HepG2 (cell line): ENCODE measurements at regions of chr1 and their contacts with region 1.

Region 1: GRCh38 chr1:181936768-181937581 is 124.5 kb downstream of the ZNF648 start:
- DNase-seq: peak; percentile 57
- ATAC-seq: peak; percentile 97
- H3K4me3 ChIP-seq: no peak overlapping the region
- H3K27ac ChIP-seq: no peak overlapping the region
- H3K4me1 ChIP-seq: no peaks in the 10 kb centered on the region
- H3K27me3 ChIP-seq: no peaks in the 10 kb centered on the region; a peak in 1 of 5 replicates
- CTCF ChIP-seq: peak; percentile 86
- EP300 ChIP-seq: no peak
- POLR2A ChIP-seq: no peak
- RAD21 ChIP-seq: peak; percentile 69

Region 2: DNA sequence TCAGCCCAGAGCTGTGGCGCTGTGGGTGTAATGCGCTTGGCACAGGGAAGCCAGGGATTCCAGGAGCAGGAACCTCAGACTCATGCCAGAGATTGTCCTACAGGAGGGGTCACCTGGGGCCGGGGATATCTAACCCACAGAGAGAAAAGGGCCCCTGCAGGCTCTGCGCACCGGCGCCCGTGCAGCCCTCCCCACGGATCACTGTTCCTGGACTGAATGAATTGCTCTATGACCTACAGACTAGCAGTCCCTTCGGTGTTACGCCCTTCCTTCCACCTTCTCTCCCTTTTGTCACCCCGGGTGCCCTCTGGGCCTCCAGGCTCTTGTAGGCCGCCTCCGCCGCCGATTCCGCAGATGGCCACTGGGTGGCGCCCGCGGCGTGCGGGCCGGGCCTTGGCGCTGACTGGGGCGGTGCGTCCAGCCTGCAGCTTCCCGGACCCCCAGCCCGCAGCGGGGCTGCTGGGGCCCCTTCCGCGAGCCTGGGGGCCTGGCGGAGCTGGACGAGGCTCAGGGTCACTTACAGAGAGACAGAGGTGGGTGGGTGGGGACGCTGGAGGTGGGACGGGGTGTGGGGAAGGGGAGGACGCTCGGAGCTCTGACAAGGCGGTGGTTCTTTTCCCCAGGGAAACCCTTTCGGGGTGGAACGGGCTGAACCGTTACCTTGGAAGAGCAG is 747.1 kb before region 1 on chr1:
- CTCF ChIA-PET with region 1: no interaction called
- POLR2A ChIA-PET with region 1: no interaction called
- in situ Hi-C with region 1: no loop called
- intact Hi-C with region 1: loop called (anchors 5 kb)
- DNase-seq: peak; percentile 20
- ATAC-seq: peak; percentile 98
- H3K4me3 ChIP-seq: peak overlapping the region; percentile 21 to 49 (median 27); a peak in 4 of 6 replicates
- H3K27ac ChIP-seq: no peak overlapping the region
- H3K4me1 ChIP-seq: peaks cover 5% of the 10 kb centered on the region; the same call in 1 of the 2 replicates
- H3K27me3 ChIP-seq: peaks cover 3 to 18% of the 10 kb centered on the region in 2 experiments; a peak in 2 of 5 replicates
- CTCF ChIP-seq: peak; percentile 94
- EP300 ChIP-seq: no peak
- POLR2A ChIP-seq: no peak
- RAD21 ChIP-seq: peak; percentile 93

Region 3: DNA sequence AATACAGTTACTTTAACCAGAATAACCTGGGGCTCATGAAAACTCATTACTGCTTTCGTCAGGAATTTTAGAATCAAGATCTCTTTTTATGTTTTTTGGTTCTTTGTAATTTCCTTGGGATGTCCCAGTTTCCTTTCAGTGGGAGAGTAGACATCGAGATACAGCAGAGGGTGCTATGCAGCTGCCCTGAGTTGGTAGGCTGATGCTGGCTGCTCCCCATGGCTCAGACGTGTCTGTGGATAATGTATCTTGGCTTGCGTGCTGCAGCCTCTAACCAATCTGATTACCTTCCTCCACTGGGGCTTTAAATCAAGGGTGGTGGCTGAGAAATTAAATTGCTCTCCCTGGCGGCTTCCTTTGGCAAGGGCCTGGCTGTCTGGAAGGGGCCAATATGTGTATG is 199.9 kb before region 1 on chr1:
- CTCF ChIA-PET with region 1: no interaction called
- POLR2A ChIA-PET with region 1: no interaction called
- in situ Hi-C with region 1: no loop called
- intact Hi-C with region 1: loop called (anchors 5 kb)
- DNase-seq: no peak
- ATAC-seq: no peak
- H3K4me3 ChIP-seq: no peak overlapping the region
- H3K27ac ChIP-seq: no peak overlapping the region
- H3K4me1 ChIP-seq: no peaks in the 10 kb centered on the region
- H3K27me3 ChIP-seq: no peaks in the 10 kb centered on the region; a peak in 1 of 5 replicates
- CTCF ChIP-seq: no peak
- EP300 ChIP-seq: no peak
- POLR2A ChIP-seq: no peak
- RAD21 ChIP-seq: no peak

Region 4: DNA sequence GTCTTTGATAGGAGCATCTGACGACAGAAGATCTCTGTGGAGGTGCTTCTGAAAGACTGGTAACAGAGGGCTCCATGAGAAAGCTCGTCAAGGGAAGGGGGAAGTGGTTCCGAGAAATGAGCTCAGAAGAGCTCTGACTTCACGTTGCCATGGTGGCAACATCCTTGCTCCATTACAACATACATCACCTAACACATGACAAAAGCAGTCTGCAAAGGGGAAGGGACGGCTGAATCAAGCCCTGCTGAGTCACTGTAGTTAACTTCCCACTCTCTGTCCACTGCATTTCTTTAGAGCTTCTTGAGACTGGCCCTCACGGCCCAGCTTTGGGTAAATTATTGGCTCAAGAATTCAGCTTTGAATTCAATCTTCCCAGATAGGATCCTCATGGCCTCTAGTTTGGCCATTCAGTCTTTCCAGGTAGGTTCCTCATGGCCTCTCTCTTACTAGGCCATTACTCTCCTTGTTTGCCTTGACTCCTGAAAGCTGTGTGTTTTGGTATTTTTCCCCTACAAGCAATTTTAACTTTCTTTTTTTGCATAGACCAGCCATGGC is 212.5 kb after region 1 on chr1:
- CTCF ChIA-PET with region 1: no interaction called
- POLR2A ChIA-PET with region 1: no interaction called
- in situ Hi-C with region 1: no loop called
- intact Hi-C with region 1: no loop called
- DNase-seq: no peak
- ATAC-seq: no peak
- H3K4me3 ChIP-seq: no peak overlapping the region
- H3K27ac ChIP-seq: no peak overlapping the region
- H3K4me1 ChIP-seq: peaks cover 23% of the 10 kb centered on the region
- H3K27me3 ChIP-seq: no peaks in the 10 kb centered on the region; a peak in 1 of 5 replicates
- CTCF ChIP-seq: no peak
- EP300 ChIP-seq: no peak
- POLR2A ChIP-seq: no peak
- RAD21 ChIP-seq: no peak